ENCODE measurements at regions of chr3 and their contacts with region 1.

Region 1: DNA sequence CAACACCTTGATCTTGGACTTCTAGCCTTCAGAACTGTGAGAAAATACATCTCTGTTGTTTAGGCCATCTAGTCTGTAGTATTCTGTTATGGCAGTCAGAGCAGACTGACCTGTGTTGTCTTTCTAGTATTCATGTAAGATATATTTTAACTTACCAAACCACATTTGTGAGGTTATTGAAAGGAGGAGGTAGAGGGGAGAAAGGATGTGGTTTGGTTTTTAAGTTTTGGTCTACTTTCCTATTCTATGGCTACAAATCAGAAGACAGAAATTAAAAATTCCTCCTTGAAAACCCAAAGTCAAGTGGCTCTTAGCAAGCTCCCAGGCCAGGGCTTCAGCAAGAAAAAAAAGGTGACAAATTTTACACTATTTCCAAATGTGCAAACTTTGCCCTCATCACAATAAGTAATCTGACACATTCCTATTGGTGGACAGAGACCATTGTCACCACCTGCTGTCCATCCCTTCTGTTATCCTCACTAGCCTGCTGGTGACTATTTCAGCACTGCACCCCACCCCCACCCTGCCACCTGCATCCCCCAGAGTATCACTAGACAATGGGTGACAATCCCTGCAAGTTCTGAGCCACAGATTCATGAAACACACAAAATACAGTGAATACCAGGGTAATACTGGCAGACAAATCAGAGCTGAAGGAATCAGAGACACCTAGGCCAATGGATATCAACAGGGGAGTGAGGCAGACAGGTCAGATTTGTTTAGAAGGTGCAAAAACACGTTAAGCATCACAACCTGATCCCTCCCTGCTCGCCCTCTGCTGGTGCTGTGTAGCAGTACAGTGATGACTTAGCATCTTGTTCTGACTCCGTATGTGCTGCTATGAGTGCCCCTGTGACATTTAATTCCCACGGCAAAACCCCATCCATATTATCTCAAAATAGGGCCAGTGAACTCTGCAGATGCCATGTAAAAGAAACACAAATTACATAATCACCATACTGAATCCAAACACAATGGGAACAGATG is 79.0 kb upstream of the DCLK3 start:
- DNase-seq: peak; percentile 20
- H3K4me3 ChIP-seq: no peak overlapping the region
- H3K27ac ChIP-seq: no peak overlapping the region
- H3K4me1 ChIP-seq: no peaks in the 10 kb centered on the region
- H3K27me3 ChIP-seq: peaks cover 2% of the 10 kb centered on the region
- CTCF ChIP-seq: peak; percentile 69 to 82

Region 2: GRCh38 chr3:36729204-36730056 is 113.9 kb before region 1 on chr3:
- CTCF ChIA-PET with region 1: no interaction called
- dilution Hi-C with region 1: no loop called
- in situ Hi-C with region 1: loop called in 1 of 2 experiments (anchors 10 kb)
- intact Hi-C with region 1: loop called (anchors 1 kb)
- DNase-seq: peak; percentile 28
- H3K4me3 ChIP-seq: no peak overlapping the region
- H3K27ac ChIP-seq: no peak overlapping the region
- H3K4me1 ChIP-seq: no peaks in the 10 kb centered on the region
- H3K27me3 ChIP-seq: no peaks in the 10 kb centered on the region
- CTCF ChIP-seq: peak; percentile 66 to 69

Region 3: GRCh38 chr3:36741285-36741684 is 102.1 kb before region 1 on chr3:
- CTCF ChIA-PET with region 1: no interaction called
- dilution Hi-C with region 1: no loop called
- in situ Hi-C with region 1: no loop called
- intact Hi-C with region 1: loop called (anchors 5 kb)
- DNase-seq: peak; percentile 8
- H3K4me3 ChIP-seq: no peak overlapping the region
- H3K27ac ChIP-seq: no peak overlapping the region
- H3K4me1 ChIP-seq: no peaks in the 10 kb centered on the region
- H3K27me3 ChIP-seq: no peaks in the 10 kb centered on the region
- CTCF ChIP-seq: peak; percentile 19 to 38

Region 4: GRCh38 chr3:36792342-36792741 is 51.0 kb before region 1 on chr3:
- CTCF ChIA-PET with region 1: no interaction called
- dilution Hi-C with region 1: no loop called
- in situ Hi-C with region 1: no loop called
- intact Hi-C with region 1: loop called (anchors 1 kb)
- DNase-seq: peak; percentile 27
- H3K4me3 ChIP-seq: no peak overlapping the region
- H3K27ac ChIP-seq: no peak overlapping the region
- H3K4me1 ChIP-seq: no peaks in the 10 kb centered on the region
- H3K27me3 ChIP-seq: no peaks in the 10 kb centered on the region
- CTCF ChIP-seq: peak; percentile 54 to 76

Region 5: GRCh38 chr3:36868614-36869436 is 25.5 kb after region 1 on chr3:
- CTCF ChIA-PET with region 1: no interaction called
- dilution Hi-C with region 1: no loop called
- in situ Hi-C with region 1: no loop called
- intact Hi-C with region 1: loop called (anchors 2 kb)
- DNase-seq: peak; percentile 45
- H3K4me3 ChIP-seq: no peak overlapping the region
- H3K27ac ChIP-seq: no peak overlapping the region
- H3K4me1 ChIP-seq: no peaks in the 10 kb centered on the region
- H3K27me3 ChIP-seq: no peaks in the 10 kb centered on the region
- CTCF ChIP-seq: peak; percentile 74 to 82

Measured in mammary epithelial cell (primary cell).